ENCODE measurements at regions of chr2 and their contacts with region 1.

Region 1: DNA sequence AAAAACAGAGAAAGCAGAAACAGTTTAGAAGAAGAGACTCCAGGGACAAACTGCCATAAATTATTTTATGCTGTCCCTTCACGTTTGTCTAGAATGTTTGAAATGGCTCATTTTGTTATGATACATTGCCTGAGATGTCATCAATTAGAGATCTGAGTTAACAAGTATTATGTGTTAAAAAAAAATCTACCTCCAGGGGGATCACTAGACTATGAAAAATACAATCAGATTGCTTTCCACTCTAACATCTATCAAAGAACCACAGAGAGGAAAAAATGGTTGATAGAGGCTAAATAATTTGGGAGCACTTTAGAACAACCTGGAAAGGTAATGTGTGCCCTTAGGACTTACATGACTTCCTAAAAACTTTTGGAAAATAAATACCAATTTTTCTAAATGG is 103.8 kb upstream of the CCDC150 start:
- DNase-seq: no peak
- H3K4me3 Mint-ChIP-seq: no peak overlapping the region
- H3K27ac Mint-ChIP-seq: no peak overlapping the region
- H3K4me1 Mint-ChIP-seq: peaks cover 28% of the 10 kb centered on the region
- H3K27me3 Mint-ChIP-seq: peaks cover 18% of the 10 kb centered on the region

Region 2: DNA sequence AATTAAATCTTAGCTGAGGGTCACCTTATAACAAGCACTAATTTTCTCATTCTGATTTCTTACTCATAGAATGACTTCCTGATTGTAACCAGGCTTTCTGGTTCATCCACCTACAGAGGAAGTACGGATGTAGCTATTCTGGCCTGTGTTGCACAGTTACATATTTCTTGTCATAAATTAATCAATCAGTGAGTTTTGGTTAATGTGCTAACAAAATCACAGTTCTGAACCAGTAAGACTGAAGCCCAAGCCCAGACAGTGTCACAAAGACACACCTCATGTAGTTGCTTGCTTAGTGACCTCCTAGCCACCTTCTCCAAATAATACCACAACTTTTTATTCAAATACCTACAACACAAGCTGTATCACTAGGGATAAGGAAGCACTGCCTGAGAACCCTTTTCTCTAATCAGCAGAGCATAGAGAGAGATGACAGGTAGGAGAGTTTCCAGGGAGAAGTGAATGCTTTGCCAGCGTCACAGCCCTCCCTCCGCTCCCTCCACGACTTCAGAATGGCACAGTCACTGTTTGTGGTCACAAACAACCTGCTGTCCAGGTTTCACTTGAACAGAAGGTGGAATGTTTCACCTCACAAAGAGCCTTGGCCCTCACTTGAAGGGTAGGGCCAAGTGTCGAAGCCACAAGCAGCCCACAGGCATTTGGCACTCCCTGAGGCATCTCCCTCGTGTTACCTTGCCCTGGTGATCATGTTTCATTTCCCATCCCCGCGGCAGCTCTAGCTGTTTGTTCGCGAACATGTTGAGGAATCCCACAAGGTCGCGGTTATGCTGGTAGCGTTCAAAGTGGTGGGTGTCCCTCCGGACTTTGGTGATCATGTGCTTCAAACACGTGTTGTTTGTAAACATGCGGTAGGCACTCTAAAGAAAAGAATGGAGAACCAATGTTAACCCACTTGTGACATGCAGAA is 243.6 kb before region 1 on chr2:
- intact Hi-C with region 1: loop called (anchors 5 kb)
- DNase-seq: no peak
- H3K4me3 Mint-ChIP-seq: no peak overlapping the region
- H3K27ac Mint-ChIP-seq: no peak overlapping the region
- H3K4me1 Mint-ChIP-seq: peaks cover 46% of the 10 kb centered on the region
- H3K27me3 Mint-ChIP-seq: peaks cover 2% of the 10 kb centered on the region

Region 3: DNA sequence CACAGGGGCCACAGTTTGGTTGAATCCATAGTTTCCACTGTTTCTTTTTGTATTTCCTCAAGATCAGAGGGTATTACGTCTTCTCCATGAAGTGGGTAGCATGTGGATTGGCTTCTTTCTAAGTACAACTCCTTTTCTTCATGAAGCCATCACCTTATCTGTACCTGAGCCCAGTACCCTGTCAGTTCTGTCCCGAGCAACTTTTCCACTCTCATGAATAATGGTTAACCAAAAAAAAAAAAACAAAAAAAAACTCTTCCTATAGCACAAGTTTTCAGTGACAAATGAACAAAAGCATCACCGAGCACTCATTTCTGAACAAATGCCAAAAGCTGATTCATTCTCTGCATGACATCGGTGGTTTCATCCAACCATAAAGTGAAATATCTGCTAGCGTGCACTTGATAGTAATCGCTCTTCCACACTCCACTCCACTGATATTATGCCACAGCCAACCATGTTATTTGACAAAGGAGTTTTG is 50.8 kb after region 1 on chr2:
- intact Hi-C with region 1: loop called (anchors 5 kb)
- DNase-seq: no peak
- H3K4me3 Mint-ChIP-seq: no peak overlapping the region
- H3K27ac Mint-ChIP-seq: no peak overlapping the region
- H3K4me1 Mint-ChIP-seq: no peaks in the 10 kb centered on the region
- H3K27me3 Mint-ChIP-seq: peaks cover 69% of the 10 kb centered on the region

Region 4: GRCh38 chr2:196750982-196751635 is 215.4 kb after region 1 on chr2:
- intact Hi-C with region 1: loop called (anchors 10 kb)
- DNase-seq: peak; percentile 47
- H3K4me3 Mint-ChIP-seq: no peak overlapping the region
- H3K27ac Mint-ChIP-seq: no peak overlapping the region
- H3K4me1 Mint-ChIP-seq: peaks cover 15% of the 10 kb centered on the region
- H3K27me3 Mint-ChIP-seq: no peaks in the 10 kb centered on the region